ENCODE measurements at regions of chr4 and their contacts with region 1.

Region 1: GRCh38 chr4:128454281-128455075 is 166.9 kb upstream of the PGRMC2 start:
- DNase-seq: peak; percentile 74 to 88 (median 83)
- ATAC-seq: peak; percentile 98
- H3K4me3 ChIP-seq: no peak overlapping the region
- H3K27ac ChIP-seq: no peak overlapping the region
- H3K4me1 ChIP-seq: peaks cover 0 to 7% of the 10 kb centered on the region in 2 experiments; a peak in 3 of 5 replicates
- H3K27me3 ChIP-seq: no peaks in the 10 kb centered on the region
- CTCF ChIP-seq: peak; percentile 79 to 91 (median 91)
- EP300 ChIP-seq: peak; percentile 55
- POLR2A ChIP-seq: no peak
- RAD21 ChIP-seq: peak; percentile 92

Region 2: GRCh38 chr4:128358231-128358912 is 96.1 kb before region 1 on chr4:
- CTCF ChIA-PET with region 1: no interaction called
- POLR2A ChIA-PET with region 1: no interaction called
- in situ Hi-C with region 1: no loop called
- intact Hi-C with region 1: no loop called
- DNase-seq: peak in 1 of 4 experiments; percentile 30
- ATAC-seq: peak; percentile 39; the same call in 2 of the 3 replicates
- H3K4me3 ChIP-seq: no peak overlapping the region
- H3K27ac ChIP-seq: no peak overlapping the region
- H3K4me1 ChIP-seq: peaks cover 2 to 23% of the 10 kb centered on the region in 2 experiments; a peak in 3 of 5 replicates
- H3K27me3 ChIP-seq: no peaks in the 10 kb centered on the region
- CTCF ChIP-seq: no peak
- EP300 ChIP-seq: no peak
- POLR2A ChIP-seq: no peak
- RAD21 ChIP-seq: no peak

Region 3: GRCh38 chr4:128371001-128371777 is 83.3 kb before region 1 on chr4:
- CTCF ChIA-PET with region 1: no interaction called
- POLR2A ChIA-PET with region 1: no interaction called
- in situ Hi-C with region 1: no loop called
- intact Hi-C with region 1: no loop called
- DNase-seq: no peak
- ATAC-seq: no peak
- H3K4me3 ChIP-seq: no peak overlapping the region
- H3K27ac ChIP-seq: no peak overlapping the region
- H3K4me1 ChIP-seq: no peaks in the 10 kb centered on the region
- H3K27me3 ChIP-seq: no peaks in the 10 kb centered on the region
- CTCF ChIP-seq: no peak
- EP300 ChIP-seq: no peak
- POLR2A ChIP-seq: no peak
- RAD21 ChIP-seq: no peak

Region 4: DNA sequence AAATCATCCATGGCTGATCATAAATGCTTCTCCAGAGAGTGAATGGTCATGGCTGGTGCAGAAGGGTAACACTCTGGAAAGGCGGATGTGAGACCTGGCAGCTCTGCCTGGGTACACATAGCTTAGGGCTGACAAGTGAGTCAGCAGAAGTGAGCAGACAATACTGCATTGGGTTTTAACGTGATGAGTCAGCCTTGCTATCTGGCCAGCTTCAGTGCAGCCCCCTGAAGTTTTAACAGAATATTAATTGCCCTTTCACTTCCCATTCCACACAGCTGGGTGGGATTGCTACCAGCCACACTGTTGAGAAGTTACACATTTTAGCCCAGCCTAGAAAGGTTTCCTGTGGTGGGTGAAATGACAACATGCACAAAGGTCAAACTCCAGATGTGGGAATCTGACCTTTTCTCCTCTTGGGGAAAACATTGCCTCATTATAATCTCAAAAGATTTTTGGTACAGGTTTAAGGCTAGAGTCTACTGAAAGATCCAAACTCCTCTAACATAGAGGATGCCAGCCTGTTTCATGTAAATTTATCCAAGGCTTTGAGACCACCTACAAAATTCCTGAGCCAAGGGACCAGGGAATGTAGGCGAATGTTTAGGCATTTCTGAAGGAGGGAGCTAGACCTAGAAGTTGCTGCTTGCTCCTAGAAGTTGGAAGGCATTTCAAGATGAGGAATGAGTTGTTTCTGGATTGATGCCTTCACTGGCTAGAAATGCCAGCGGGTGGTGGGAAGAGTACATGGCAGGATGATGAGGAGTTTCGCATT is 63.4 kb after region 1 on chr4:
- CTCF ChIA-PET with region 1: no interaction called
- POLR2A ChIA-PET with region 1: interaction called, 3 read pairs
- in situ Hi-C with region 1: no loop called
- intact Hi-C with region 1: loop called (anchors 1 kb)
- DNase-seq: peak; percentile 69 to 89 (median 78)
- ATAC-seq: peak; percentile 92
- H3K4me3 ChIP-seq: no peak overlapping the region
- H3K27ac ChIP-seq: peak overlapping the region; percentile 95
- H3K4me1 ChIP-seq: peaks cover 6 to 65% of the 10 kb centered on the region in 2 experiments
- H3K27me3 ChIP-seq: no peaks in the 10 kb centered on the region
- CTCF ChIP-seq: no peak
- EP300 ChIP-seq: peak; percentile 81
- POLR2A ChIP-seq: no peak
- RAD21 ChIP-seq: no peak; a peak in 2 of 4 replicates

Region 5: GRCh38 chr4:128565565-128566186 is 111.2 kb after region 1 on chr4:
- CTCF ChIA-PET with region 1: no interaction called
- POLR2A ChIA-PET with region 1: no interaction called
- in situ Hi-C with region 1: no loop called
- intact Hi-C with region 1: loop called (anchors 2 kb)
- DNase-seq: peak in 2 of 4 experiments; percentile 39 to 54
- ATAC-seq: peak; percentile 79
- H3K4me3 ChIP-seq: no peak overlapping the region
- H3K27ac ChIP-seq: no peak overlapping the region
- H3K4me1 ChIP-seq: peaks cover 6 to 25% of the 10 kb centered on the region in 2 experiments; a peak in 4 of 5 replicates
- H3K27me3 ChIP-seq: no peaks in the 10 kb centered on the region
- CTCF ChIP-seq: peak; percentile 57 to 71 (median 60)
- EP300 ChIP-seq: no peak
- POLR2A ChIP-seq: no peak
- RAD21 ChIP-seq: peak; percentile 34 to 64

Region 6: GRCh38 chr4:128649575-128650205 is 195.2 kb after region 1 on chr4:
- CTCF ChIA-PET with region 1: interaction called, 3 read pairs
- POLR2A ChIA-PET with region 1: no interaction called
- in situ Hi-C with region 1: no loop called
- intact Hi-C with region 1: loop called (anchors 1 kb)
- DNase-seq: no peak
- ATAC-seq: no peak
- H3K4me3 ChIP-seq: no peak overlapping the region
- H3K27ac ChIP-seq: no peak overlapping the region
- H3K4me1 ChIP-seq: peaks cover 3 to 5% of the 10 kb centered on the region in 2 experiments; a peak in 2 of 5 replicates
- H3K27me3 ChIP-seq: no peaks in the 10 kb centered on the region
- CTCF ChIP-seq: no peak
- EP300 ChIP-seq: no peak
- POLR2A ChIP-seq: no peak
- RAD21 ChIP-seq: no peak

Measured in K562 (cell line).